ENCODE measurements at regions of chr6 and their contacts with region 1.

Region 1: GRCh38 chr6:85323435-85324040 is 126.3 kb upstream of the NT5E start:
- DNase-seq: peak; percentile 76
- ATAC-seq: peak; percentile 98
- H3K4me3 ChIP-seq: no peak overlapping the region
- H3K27ac ChIP-seq: no peak overlapping the region
- H3K4me1 ChIP-seq: no peaks in the 10 kb centered on the region
- H3K27me3 ChIP-seq: no peaks in the 10 kb centered on the region
- CTCF ChIP-seq: peak; percentile 69 to 98 (median 90); a peak in 5 of 6 replicates
- POLR2A ChIP-seq: no peak
- RAD21 ChIP-seq: peak; percentile 92

Region 2: GRCh38 chr6:83884523-83884922 is 1439.0 kb before region 1 on chr6:
- CTCF ChIA-PET with region 1: no interaction called
- POLR2A ChIA-PET with region 1: no interaction called
- RAD21 ChIA-PET with region 1: no interaction called
- intact Hi-C with region 1: loop called (anchors 10 kb)
- DNase-seq: peak; percentile 42
- ATAC-seq: peak; percentile 76
- H3K4me3 ChIP-seq: no peak overlapping the region
- H3K27ac ChIP-seq: no peak overlapping the region
- H3K4me1 ChIP-seq: no peaks in the 10 kb centered on the region
- H3K27me3 ChIP-seq: no peaks in the 10 kb centered on the region
- CTCF ChIP-seq: peak; percentile 46 to 79 (median 72); a peak in 5 of 6 replicates
- POLR2A ChIP-seq: no peak
- RAD21 ChIP-seq: peak; percentile 89

Region 3: GRCh38 chr6:84227434-84228197 is 1095.9 kb before region 1 on chr6 and contains the start of gene CEP162:
- CTCF ChIA-PET with region 1: interaction called, 3 read pairs
- POLR2A ChIA-PET with region 1: no interaction called
- RAD21 ChIA-PET with region 1: no interaction called
- intact Hi-C with region 1: loop called (anchors 5 kb)
- DNase-seq: peak; percentile 72
- ATAC-seq: peak; percentile 98
- H3K4me3 ChIP-seq: peak within 1 kb of the TSS; percentile 76 to 84
- H3K27ac ChIP-seq: peak within 1 kb of the TSS; percentile 55
- H3K4me1 ChIP-seq: peaks cover 3 to 22% of the 10 kb centered on the region in 2 experiments; a peak in 2 of 4 replicates
- H3K27me3 ChIP-seq: peaks cover 5% of the 10 kb centered on the region
- CTCF ChIP-seq: peak; percentile 20 to 75 (median 67); a peak in 5 of 6 replicates
- POLR2A ChIP-seq: no peak
- RAD21 ChIP-seq: peak; percentile 35; the same call in 1 of the 2 replicates
- total RNA-seq, gene CEP162: 5.5 TPM

Region 4: GRCh38 chr6:84422380-84422968 is 901.1 kb before region 1 on chr6:
- CTCF ChIA-PET with region 1: interaction called, 7 read pairs
- POLR2A ChIA-PET with region 1: no interaction called
- RAD21 ChIA-PET with region 1: no interaction called
- intact Hi-C with region 1: loop called (anchors 1 kb)
- DNase-seq: peak; percentile 31
- ATAC-seq: peak; percentile 99
- H3K4me3 ChIP-seq: peak overlapping the region in 1 of 2 experiments; percentile 20; a peak in 1 of 4 replicates
- H3K27ac ChIP-seq: no peak overlapping the region
- H3K4me1 ChIP-seq: 0 out of 4 replicates have a peak, but pooled peaks cover 0 to 3% of the 10 kb centered on the region in 2 experiments
- H3K27me3 ChIP-seq: 0 out of 2 replicates have a peak, but pooled peaks cover 8% of the 10 kb centered on the region
- CTCF ChIP-seq: peak; percentile 79 to 97 (median 93)
- POLR2A ChIP-seq: no peak
- RAD21 ChIP-seq: peak; percentile 84

Region 5: DNA sequence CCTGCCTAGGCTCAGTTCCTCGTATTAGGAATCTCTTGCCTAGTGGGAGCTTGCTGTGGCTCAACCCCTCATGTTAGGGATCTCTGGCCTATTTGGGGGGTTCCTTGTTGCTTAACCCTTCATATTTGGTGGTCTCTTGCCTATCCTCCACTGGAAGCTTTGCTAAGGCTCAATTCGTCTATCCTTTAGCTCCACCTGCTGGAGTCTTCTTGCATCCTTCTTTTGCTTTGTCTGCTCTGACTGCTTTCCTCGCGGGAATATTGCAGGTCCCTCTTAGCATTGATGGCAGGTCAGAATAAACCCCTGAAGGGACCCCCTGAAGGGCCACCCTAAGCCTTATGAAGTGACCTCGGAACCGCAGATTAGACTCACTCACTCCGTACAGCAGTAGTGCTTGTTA is 356.1 kb before region 1 on chr6:
- CTCF ChIA-PET with region 1: no interaction called
- POLR2A ChIA-PET with region 1: no interaction called
- RAD21 ChIA-PET with region 1: no interaction called
- intact Hi-C with region 1: loop called (anchors 5 kb)
- DNase-seq: peak; percentile 48
- ATAC-seq: peak; percentile 79
- H3K4me3 ChIP-seq: no peak overlapping the region
- H3K27ac ChIP-seq: no peak overlapping the region
- H3K4me1 ChIP-seq: no peaks in the 10 kb centered on the region
- H3K27me3 ChIP-seq: peaks cover 2% of the 10 kb centered on the region; the same call in 1 of the 2 replicates
- CTCF ChIP-seq: peak; percentile 60 to 70 (median 62)
- POLR2A ChIP-seq: no peak
- RAD21 ChIP-seq: peak; percentile 80

Region 6: GRCh38 chr6:85015396-85015990 is 308.0 kb before region 1 on chr6:
- CTCF ChIA-PET with region 1: no interaction called
- POLR2A ChIA-PET with region 1: no interaction called
- RAD21 ChIA-PET with region 1: no interaction called
- intact Hi-C with region 1: loop called (anchors 5 kb)
- DNase-seq: peak; percentile 63
- ATAC-seq: peak; percentile 99
- H3K4me3 ChIP-seq: no peak overlapping the region
- H3K27ac ChIP-seq: no peak overlapping the region
- H3K4me1 ChIP-seq: peaks cover 0 to 5% of the 10 kb centered on the region in 2 experiments; a peak in 1 of 4 replicates
- H3K27me3 ChIP-seq: peaks cover 3% of the 10 kb centered on the region; the same call in 1 of the 2 replicates
- CTCF ChIP-seq: peak; percentile 74 to 86 (median 80)
- POLR2A ChIP-seq: no peak
- RAD21 ChIP-seq: peak; percentile 67

Region 7: GRCh38 chr6:85126485-85127167 is 196.9 kb before region 1 on chr6:
- CTCF ChIA-PET with region 1: interaction called, 6 read pairs
- POLR2A ChIA-PET with region 1: no interaction called
- RAD21 ChIA-PET with region 1: no interaction called
- intact Hi-C with region 1: loop called (anchors 5 kb)
- DNase-seq: peak; percentile 47
- ATAC-seq: peak; percentile 100
- H3K4me3 ChIP-seq: no peak overlapping the region
- H3K27ac ChIP-seq: no peak overlapping the region
- H3K4me1 ChIP-seq: no peaks in the 10 kb centered on the region
- H3K27me3 ChIP-seq: 0 out of 2 replicates have a peak, but pooled peaks cover 9% of the 10 kb centered on the region
- CTCF ChIP-seq: peak; percentile 63 to 83 (median 79); a peak in 5 of 6 replicates
- POLR2A ChIP-seq: no peak
- RAD21 ChIP-seq: peak; percentile 81

Region 8: DNA sequence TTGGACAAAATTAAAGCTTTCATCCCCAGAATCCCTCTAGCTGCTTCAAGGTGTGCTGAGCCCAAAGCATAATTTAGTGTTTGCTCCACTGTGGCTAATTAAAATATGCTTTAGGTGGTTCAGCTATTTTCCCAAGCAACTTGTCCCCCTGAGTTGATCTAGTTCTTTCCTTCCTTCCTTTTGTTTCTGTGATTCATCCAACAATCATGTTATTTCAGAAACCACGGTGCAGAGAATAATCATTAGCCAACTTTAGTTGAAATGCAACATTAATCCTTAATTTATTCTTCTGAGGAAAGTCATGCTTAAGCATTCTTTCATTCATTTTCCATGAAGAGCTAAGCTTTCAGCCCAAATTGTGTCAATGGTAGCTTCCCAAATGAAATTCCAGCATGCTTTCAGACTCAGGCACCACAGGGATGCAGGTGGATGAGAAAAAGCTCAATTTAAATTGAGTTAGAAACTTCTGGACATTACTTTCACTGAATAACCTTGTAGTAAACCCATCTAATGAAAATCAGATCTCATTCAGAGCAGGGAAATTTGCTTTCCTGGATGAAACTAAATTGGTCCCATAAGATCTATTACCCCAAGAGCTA is 82.7 kb before region 1 on chr6:
- CTCF ChIA-PET with region 1: no interaction called
- POLR2A ChIA-PET with region 1: no interaction called
- RAD21 ChIA-PET with region 1: no interaction called
- intact Hi-C with region 1: no loop called
- DNase-seq: no peak
- ATAC-seq: no peak
- H3K4me3 ChIP-seq: no peak overlapping the region
- H3K27ac ChIP-seq: no peak overlapping the region
- H3K4me1 ChIP-seq: no peaks in the 10 kb centered on the region
- H3K27me3 ChIP-seq: no peaks in the 10 kb centered on the region; the same call in 1 of the 2 replicates
- CTCF ChIP-seq: no peak
- POLR2A ChIP-seq: no peak
- RAD21 ChIP-seq: no peak

Region 9: GRCh38 chr6:85756982-85757381 is 433.4 kb after region 1 on chr6:
- CTCF ChIA-PET with region 1: no interaction called
- POLR2A ChIA-PET with region 1: no interaction called
- RAD21 ChIA-PET with region 1: no interaction called
- intact Hi-C with region 1: no loop called
- DNase-seq: peak; percentile 22
- ATAC-seq: no peak
- H3K4me3 ChIP-seq: no peak overlapping the region
- H3K27ac ChIP-seq: no peak overlapping the region
- H3K4me1 ChIP-seq: no peaks in the 10 kb centered on the region
- H3K27me3 ChIP-seq: no peaks in the 10 kb centered on the region
- CTCF ChIP-seq: peak; percentile 26 to 52 (median 48); a peak in 4 of 6 replicates
- POLR2A ChIP-seq: no peak
- RAD21 ChIP-seq: peak; percentile 72

Measured in HCT116 (cell line).